ENCODE measurements at regions of chr6 and their contacts with region 1.

Region 1: DNA sequence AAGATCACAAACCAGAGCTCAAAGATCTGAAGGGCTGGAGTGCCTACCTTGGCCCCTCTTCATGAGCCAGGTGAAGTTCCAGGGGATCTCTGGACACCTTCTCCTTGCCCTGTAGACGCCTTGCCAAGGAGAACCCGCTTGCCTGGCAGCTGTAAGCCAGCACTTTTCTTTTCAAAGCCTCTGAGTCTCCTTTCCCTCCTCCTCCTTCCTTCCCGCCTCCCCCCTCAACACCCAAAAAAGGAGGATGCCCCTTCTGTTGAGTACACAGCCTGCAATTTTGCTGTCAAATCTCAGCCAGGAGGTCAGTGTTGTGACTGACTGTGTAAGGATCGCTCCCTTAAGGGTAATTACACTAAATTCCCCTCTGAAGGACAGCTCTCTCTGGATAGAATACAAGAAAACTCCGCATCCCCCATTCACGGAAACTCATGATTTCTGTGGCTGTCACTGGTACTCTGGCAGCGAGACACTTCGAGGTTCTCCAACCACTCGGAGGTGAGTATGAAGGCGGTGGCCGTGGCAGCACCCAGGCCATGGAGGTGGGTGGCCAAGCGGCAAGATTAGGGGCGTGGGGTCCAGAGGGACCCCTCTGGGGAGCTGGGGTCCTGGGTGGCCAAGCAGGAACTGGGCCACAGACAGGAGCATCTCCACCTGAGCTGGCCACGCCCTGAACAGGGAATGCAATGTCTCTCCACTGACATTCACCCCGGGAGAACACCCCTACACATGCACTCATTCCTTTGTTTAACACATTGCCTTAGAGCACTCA is 23.2 kb upstream of the FOXP4 start:
- DNase-seq: no peak
- ATAC-seq: no peak
- H3K4me3 ChIP-seq: no peak overlapping the region
- H3K27ac ChIP-seq: no peak overlapping the region
- H3K4me1 ChIP-seq: no peaks in the 10 kb centered on the region
- H3K27me3 ChIP-seq: peaks cover 49% of the 10 kb centered on the region
- CTCF ChIP-seq: no peak
- POLR2A ChIP-seq: no peak
- RAD21 ChIP-seq: no peak

Region 2: GRCh38 chr6:41538556-41539182 is 15.7 kb after region 1 on chr6:
- CTCF ChIA-PET with region 1: no interaction called
- POLR2A ChIA-PET with region 1: no interaction called
- dilution Hi-C with region 1: no loop called
- in situ Hi-C with region 1: no loop called
- intact Hi-C with region 1: loop called (anchors 1 kb)
- DNase-seq: peak; percentile 13
- ATAC-seq: peak; percentile 24; the same call in 1 of the 2 replicates
- H3K4me3 ChIP-seq: no peak overlapping the region
- H3K27ac ChIP-seq: no peak overlapping the region
- H3K4me1 ChIP-seq: peaks cover 4% of the 10 kb centered on the region; the same call in 1 of the 2 replicates
- H3K27me3 ChIP-seq: peaks cover 45% of the 10 kb centered on the region
- CTCF ChIP-seq: no peak
- POLR2A ChIP-seq: no peak
- RAD21 ChIP-seq: no peak

Measured in IMR-90 (cell line).